ENCODE measurements at regions of chr5 and their contacts with region 1.

Region 1: GRCh38 chr5:13957032-13957645 is 12.7 kb upstream of the DNAH5 start:
- DNase-seq: peak; percentile 48
- H3K4me3 Mint-ChIP-seq: no peak overlapping the region
- H3K27ac Mint-ChIP-seq: no peak overlapping the region
- H3K4me1 Mint-ChIP-seq: peaks cover 2% of the 10 kb centered on the region
- H3K27me3 Mint-ChIP-seq: no peaks in the 10 kb centered on the region
- CTCF ChIP-seq: peak; percentile 40

Region 2: GRCh38 chr5:13478831-13479465 is 478.2 kb before region 1 on chr5:
- CTCF ChIA-PET with region 1: interaction called, 15 read pairs
- intact Hi-C with region 1: loop called (anchors 10 kb)
- DNase-seq: peak; percentile 41
- H3K4me3 Mint-ChIP-seq: no peak overlapping the region
- H3K27ac Mint-ChIP-seq: no peak overlapping the region
- H3K4me1 Mint-ChIP-seq: no peaks in the 10 kb centered on the region
- H3K27me3 Mint-ChIP-seq: no peaks in the 10 kb centered on the region
- CTCF ChIP-seq: peak; percentile 54

Region 3: GRCh38 chr5:13695076-13695712 is 261.9 kb before region 1 on chr5:
- CTCF ChIA-PET with region 1: no interaction called
- intact Hi-C with region 1: loop called (anchors 10 kb)
- DNase-seq: peak; percentile 46
- H3K4me3 Mint-ChIP-seq: no peak overlapping the region
- H3K27ac Mint-ChIP-seq: no peak overlapping the region
- H3K4me1 Mint-ChIP-seq: peaks cover 9% of the 10 kb centered on the region
- H3K27me3 Mint-ChIP-seq: no peaks in the 10 kb centered on the region
- CTCF ChIP-seq: no peak

Region 4: GRCh38 chr5:13831351-13831750 is 125.8 kb before region 1 on chr5:
- CTCF ChIA-PET with region 1: no interaction called
- intact Hi-C with region 1: loop called (anchors 2 kb)
- DNase-seq: no peak
- H3K4me3 Mint-ChIP-seq: no peak overlapping the region
- H3K27ac Mint-ChIP-seq: no peak overlapping the region
- H3K4me1 Mint-ChIP-seq: no peaks in the 10 kb centered on the region
- H3K27me3 Mint-ChIP-seq: no peaks in the 10 kb centered on the region
- CTCF ChIP-seq: no peak